CD14-positive monocyte (primary cell): ENCODE measurements at regions of chr4 and their contacts with region 1.

Region 1: GRCh38 chr4:81471588-81472288 is at the start of gene RASGEF1B:
- DNase-seq: peak; percentile 93 to 97 (median 93)
- H3K4me3 ChIP-seq: peak within 1 kb of the TSS; percentile 89 to 95 (median 94)
- H3K4me3 Mint-ChIP-seq: peak within 1 kb of the TSS; percentile 94 to 100
- H3K27ac ChIP-seq: peak within 1 kb of the TSS; percentile 97 to 98
- H3K27ac Mint-ChIP-seq: peak within 1 kb of the TSS; percentile 99 to 100 (median 99)
- H3K4me1 ChIP-seq: peaks cover 28 to 36% of the 10 kb centered on the region in 2 donors
- H3K4me1 Mint-ChIP-seq: peaks cover 43% of the 10 kb centered on the region
- H3K27me3 ChIP-seq: peaks cover 0 to 11% of the 10 kb centered on the region in 2 donors
- H3K27me3 Mint-ChIP-seq: peaks cover 9 to 21% (median 15%) of the 10 kb centered on the region in 3 donors
- CTCF ChIP-seq: no peak
- polyA plus RNA-seq, gene RASGEF1B: 20.3 to 76.9 (median 36.6) TPM

Region 2: DNA sequence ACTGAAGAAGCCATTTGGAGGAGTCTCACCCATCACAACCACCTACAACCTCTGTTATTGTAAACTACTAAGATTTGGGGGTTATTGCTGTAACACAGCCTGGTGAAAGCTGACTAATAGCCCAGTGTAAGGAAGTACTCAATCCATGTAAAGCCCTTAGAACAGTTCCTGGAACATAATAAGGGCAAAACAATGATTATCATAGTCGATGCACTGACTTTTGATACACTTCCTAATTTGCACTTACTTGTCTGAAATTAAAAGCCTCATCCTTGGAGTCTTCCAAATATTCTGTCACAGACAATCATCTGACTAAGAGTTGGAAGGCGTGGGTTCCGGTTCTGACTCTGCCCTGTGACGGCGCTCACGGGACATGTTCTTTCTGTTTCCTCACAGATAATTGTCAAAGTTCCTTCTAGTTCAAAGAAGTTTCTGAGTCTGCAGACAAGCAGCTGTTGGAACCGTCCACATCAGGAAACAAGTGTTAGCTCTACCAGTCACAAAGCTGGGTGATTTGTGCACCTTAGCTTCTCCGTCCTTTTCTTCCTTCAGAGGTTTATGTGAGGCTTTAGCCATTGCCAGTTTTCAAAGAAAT is 33.4 kb after region 1 on chr4:
- intact Hi-C with region 1: loop called (anchors 2 to 5 kb)
- DNase-seq: peak; percentile 96 to 99 (median 97)
- H3K4me3 ChIP-seq: peak overlapping the region in 1 of 3 experiments; percentile 19
- H3K4me3 Mint-ChIP-seq: peak overlapping the region; percentile 52 to 79
- H3K27ac ChIP-seq: peak overlapping the region; percentile 96 to 100
- H3K27ac Mint-ChIP-seq: peak overlapping the region; percentile 97 to 100 (median 99)
- H3K4me1 ChIP-seq: peaks cover 57 to 62% of the 10 kb centered on the region in 2 donors
- H3K4me1 Mint-ChIP-seq: peaks cover 66% of the 10 kb centered on the region
- H3K27me3 ChIP-seq: no peaks in the 10 kb centered on the region
- H3K27me3 Mint-ChIP-seq: peaks cover 3 to 5% (median 3%) of the 10 kb centered on the region in 3 donors
- CTCF ChIP-seq: no peak

Region 3: DNA sequence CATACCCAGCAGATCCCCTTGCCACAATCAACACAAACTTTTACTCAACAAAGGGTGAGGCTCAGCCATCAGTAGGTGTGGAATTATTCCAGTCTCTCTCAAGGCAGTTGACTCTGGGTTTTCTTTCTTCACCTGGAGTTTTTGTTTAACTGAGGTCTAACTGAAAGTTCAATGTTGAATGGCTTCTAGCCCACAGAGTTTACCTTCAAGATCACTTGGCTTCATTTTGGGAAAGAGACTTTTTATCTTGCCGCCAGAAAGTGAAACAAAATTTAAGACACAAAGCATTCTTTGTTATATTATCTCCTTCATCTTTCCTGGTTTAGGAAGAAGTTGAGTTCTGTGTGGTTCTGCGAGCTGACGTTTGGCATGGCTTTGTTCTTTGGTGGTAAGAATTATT is 83.8 kb after region 1 on chr4:
- intact Hi-C with region 1: loop called in 1 of 2 experiments (anchors 5 kb)
- DNase-seq: no peak
- H3K4me3 ChIP-seq: no peak overlapping the region
- H3K4me3 Mint-ChIP-seq: no peak overlapping the region
- H3K27ac ChIP-seq: no peak overlapping the region
- H3K27ac Mint-ChIP-seq: no peak overlapping the region
- H3K4me1 ChIP-seq: no peaks in the 10 kb centered on the region
- H3K4me1 Mint-ChIP-seq: peaks cover 8% of the 10 kb centered on the region
- H3K27me3 ChIP-seq: no peaks in the 10 kb centered on the region
- H3K27me3 Mint-ChIP-seq: no peaks in the 10 kb centered on the region
- CTCF ChIP-seq: no peak

Region 4: DNA sequence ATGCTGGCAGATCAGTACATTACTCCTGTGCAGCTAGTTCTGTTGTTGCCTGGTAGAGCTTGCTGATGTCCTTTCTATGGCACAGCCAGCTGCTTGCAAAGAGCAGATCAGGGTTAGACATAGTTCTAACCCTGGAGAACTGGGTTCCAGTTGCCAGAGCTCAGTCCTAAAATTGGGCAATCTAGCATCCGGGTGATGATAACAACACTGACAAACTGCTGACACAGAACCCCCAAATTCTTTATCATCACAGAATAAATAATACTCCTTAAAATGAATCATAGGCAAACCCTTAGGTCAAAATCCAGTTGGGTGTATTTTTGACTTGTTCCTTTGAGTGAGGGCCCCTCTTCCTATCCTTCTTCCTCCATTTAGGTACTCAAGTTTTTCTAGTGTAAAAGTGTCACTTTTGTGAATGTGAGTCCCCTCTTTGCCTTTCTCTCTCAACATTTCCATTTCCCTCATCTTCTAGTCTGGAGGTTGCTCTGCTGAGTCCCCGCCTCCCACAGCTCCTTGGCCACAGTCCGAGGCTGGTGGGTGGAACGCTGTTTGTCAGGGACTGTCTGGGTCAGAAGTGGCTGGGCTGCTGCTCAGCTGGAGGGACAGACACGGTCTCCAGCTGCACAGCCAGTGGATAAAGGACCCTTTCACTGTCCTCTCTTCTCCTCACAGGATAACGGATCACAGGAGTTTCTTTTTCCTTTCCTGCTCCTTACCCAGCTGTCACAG is 93.6 kb after region 1 on chr4:
- intact Hi-C with region 1: loop called in 1 of 2 experiments (anchors 2 kb)
- DNase-seq: peak; percentile 34 to 64 (median 40)
- H3K4me3 ChIP-seq: no peak overlapping the region
- H3K4me3 Mint-ChIP-seq: peak overlapping the region; percentile 1 to 47
- H3K27ac ChIP-seq: peak overlapping the region in 1 of 2 donors; percentile 47
- H3K27ac Mint-ChIP-seq: peak overlapping the region in 6 of 7 donors; percentile 73 to 93 (median 86)
- H3K4me1 ChIP-seq: peaks cover 27 to 37% of the 10 kb centered on the region in 2 donors
- H3K4me1 Mint-ChIP-seq: peaks cover 38% of the 10 kb centered on the region
- H3K27me3 ChIP-seq: no peaks in the 10 kb centered on the region
- H3K27me3 Mint-ChIP-seq: peaks cover 0 to 3% (median 0%) of the 10 kb centered on the region in 3 donors
- CTCF ChIP-seq: no peak

Region 5: GRCh38 chr4:81606801-81607501 is 135.2 kb after region 1 on chr4:
- intact Hi-C with region 1: loop called in 1 of 2 experiments (anchors 5 kb)
- DNase-seq: peak; percentile 59 to 80 (median 79)
- H3K4me3 ChIP-seq: no peak overlapping the region
- H3K4me3 Mint-ChIP-seq: peak overlapping the region in 1 of 2 donors; percentile 31
- H3K27ac ChIP-seq: peak overlapping the region; percentile 41 to 65
- H3K27ac Mint-ChIP-seq: peak overlapping the region; percentile 4 to 92 (median 68)
- H3K4me1 ChIP-seq: peaks cover 26 to 28% of the 10 kb centered on the region in 2 donors
- H3K4me1 Mint-ChIP-seq: peaks cover 29% of the 10 kb centered on the region
- H3K27me3 ChIP-seq: no peaks in the 10 kb centered on the region
- H3K27me3 Mint-ChIP-seq: peaks cover 0 to 2% (median 0%) of the 10 kb centered on the region in 3 donors
- CTCF ChIP-seq: no peak

Region 6: DNA sequence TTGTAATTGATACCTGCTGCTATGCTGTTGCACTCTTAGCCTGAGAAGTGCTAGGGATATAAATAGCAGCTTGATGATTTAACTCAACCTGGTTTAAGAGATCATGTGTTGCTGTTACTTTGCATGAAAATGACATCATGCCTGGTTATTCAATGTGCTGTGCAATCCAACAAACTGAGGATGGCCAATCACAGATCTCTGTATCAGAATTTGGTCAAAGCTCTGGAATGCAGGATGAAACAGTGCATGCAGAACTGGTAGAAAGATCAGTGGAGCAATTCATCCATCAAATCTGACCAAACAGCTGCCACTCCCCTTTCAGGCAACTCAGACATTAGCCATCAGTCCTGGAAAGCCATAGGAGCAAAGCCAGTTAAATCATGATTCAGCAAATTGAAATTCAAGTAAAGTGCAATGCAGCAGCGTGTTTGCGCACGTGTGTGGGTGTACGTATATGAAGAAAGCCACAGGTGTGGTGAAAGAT is 160.3 kb after region 1 on chr4:
- intact Hi-C with region 1: loop called in 1 of 2 experiments (anchors 10 kb)
- DNase-seq: peak in 2 of 3 donors; percentile 32 to 44
- H3K4me3 ChIP-seq: no peak overlapping the region
- H3K4me3 Mint-ChIP-seq: no peak overlapping the region
- H3K27ac ChIP-seq: no peak overlapping the region
- H3K27ac Mint-ChIP-seq: no peak overlapping the region
- H3K4me1 ChIP-seq: peaks cover 8 to 21% of the 10 kb centered on the region in 2 donors
- H3K4me1 Mint-ChIP-seq: peaks cover 25% of the 10 kb centered on the region
- H3K27me3 ChIP-seq: no peaks in the 10 kb centered on the region
- H3K27me3 Mint-ChIP-seq: peaks cover 0 to 5% (median under 1%) of the 10 kb centered on the region in 3 donors
- CTCF ChIP-seq: no peak

Region 7: GRCh38 chr4:81844717-81845116 is 373.0 kb after region 1 on chr4:
- intact Hi-C with region 1: loop called in 1 of 2 experiments (anchors 5 kb)
- DNase-seq: peak; percentile 75 to 84 (median 77)
- H3K4me3 ChIP-seq: no peak overlapping the region
- H3K4me3 Mint-ChIP-seq: no peak overlapping the region
- H3K27ac ChIP-seq: no peak overlapping the region
- H3K27ac Mint-ChIP-seq: no peak overlapping the region
- H3K4me1 ChIP-seq: no peaks in the 10 kb centered on the region
- H3K4me1 Mint-ChIP-seq: no peaks in the 10 kb centered on the region
- H3K27me3 ChIP-seq: no peaks in the 10 kb centered on the region
- H3K27me3 Mint-ChIP-seq: peaks cover 0 to 4% (median 2%) of the 10 kb centered on the region in 3 donors
- CTCF ChIP-seq: peak; percentile 73